ENCODE measurements at regions of chr3 and their contacts with region 1.

Region 1: GRCh38 chr3:143119009-143119914 is at the start of gene CHST2:
- DNase-seq: peak; percentile 86
- ATAC-seq: peak; percentile 88
- H3K4me3 Mint-ChIP-seq: peak within 1 kb of the TSS; percentile 80
- H3K27ac Mint-ChIP-seq: peak within 1 kb of the TSS; percentile 67
- H3K4me1 Mint-ChIP-seq: peaks cover 27% of the 10 kb centered on the region
- H3K27me3 Mint-ChIP-seq: peaks cover 2% of the 10 kb centered on the region
- total RNA-seq, gene CHST2: 5.1 to 6.8 TPM

Region 2: GRCh38 chr3:143081844-143082778 is 37.2 kb before region 1 on chr3:
- CTCF ChIA-PET with region 1: interaction called, 3 read pairs
- POLR2A ChIA-PET with region 1: interaction called, 5 read pairs
- intact Hi-C with region 1: loop called in 1 of 2 experiments (anchors 1 kb)
- DNase-seq: peak; percentile 54
- ATAC-seq: peak; percentile 87
- H3K4me3 Mint-ChIP-seq: peak overlapping the region; percentile 75
- H3K27ac Mint-ChIP-seq: peak overlapping the region; percentile 98
- H3K4me1 Mint-ChIP-seq: peaks cover 36% of the 10 kb centered on the region
- H3K27me3 Mint-ChIP-seq: no peaks in the 10 kb centered on the region

Region 3: GRCh38 chr3:143276592-143276991 is 157.3 kb after region 1 on chr3:
- CTCF ChIA-PET with region 1: interaction called, 3 read pairs
- POLR2A ChIA-PET with region 1: no interaction called
- intact Hi-C with region 1: loop called (anchors 2 to 5 kb)
- DNase-seq: no peak
- ATAC-seq: peak; percentile 99
- H3K4me3 Mint-ChIP-seq: no peak overlapping the region
- H3K27ac Mint-ChIP-seq: no peak overlapping the region
- H3K4me1 Mint-ChIP-seq: peaks cover 23% of the 10 kb centered on the region
- H3K27me3 Mint-ChIP-seq: no peaks in the 10 kb centered on the region

Region 4: DNA sequence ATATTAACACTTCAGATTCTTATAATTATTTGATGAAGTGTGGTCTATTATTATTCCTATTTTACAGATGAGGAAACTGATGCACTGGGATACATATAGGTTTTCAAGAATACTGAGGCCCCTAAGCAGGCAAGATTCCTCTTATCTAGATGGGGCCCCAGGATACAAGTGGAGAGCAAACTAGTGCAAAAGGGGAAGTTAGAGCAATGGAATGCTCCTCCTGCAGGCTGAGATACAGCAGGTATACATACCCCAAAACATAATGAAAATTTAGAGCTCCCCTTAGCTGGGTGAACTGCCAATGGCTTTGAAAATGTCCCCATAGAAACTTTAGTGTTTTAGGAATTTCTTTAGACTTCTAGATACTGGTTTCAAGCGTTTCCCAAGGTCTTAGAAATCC is 247.4 kb after region 1 on chr3:
- CTCF ChIA-PET with region 1: no interaction called
- POLR2A ChIA-PET with region 1: no interaction called
- intact Hi-C with region 1: loop called in 1 of 2 experiments (anchors 5 kb)
- DNase-seq: no peak
- ATAC-seq: no peak
- H3K4me3 Mint-ChIP-seq: no peak overlapping the region
- H3K27ac Mint-ChIP-seq: no peak overlapping the region
- H3K4me1 Mint-ChIP-seq: peaks cover 26% of the 10 kb centered on the region
- H3K27me3 Mint-ChIP-seq: no peaks in the 10 kb centered on the region

Region 5: GRCh38 chr3:143529798-143530197 is 410.5 kb after region 1 on chr3:
- CTCF ChIA-PET with region 1: no interaction called
- POLR2A ChIA-PET with region 1: no interaction called
- intact Hi-C with region 1: loop called in 1 of 2 experiments (anchors 5 kb)
- DNase-seq: no peak
- ATAC-seq: no peak
- H3K4me3 Mint-ChIP-seq: no peak overlapping the region
- H3K27ac Mint-ChIP-seq: no peak overlapping the region
- H3K4me1 Mint-ChIP-seq: peaks cover 10% of the 10 kb centered on the region
- H3K27me3 Mint-ChIP-seq: no peaks in the 10 kb centered on the region

Region 6: GRCh38 chr3:143753456-143753855 is 634.2 kb after region 1 on chr3:
- CTCF ChIA-PET with region 1: no interaction called
- POLR2A ChIA-PET with region 1: no interaction called
- intact Hi-C with region 1: no loop called
- DNase-seq: no peak
- ATAC-seq: no peak
- H3K4me3 Mint-ChIP-seq: no peak overlapping the region
- H3K27ac Mint-ChIP-seq: peak overlapping the region; percentile 30
- H3K4me1 Mint-ChIP-seq: peaks cover 61% of the 10 kb centered on the region
- H3K27me3 Mint-ChIP-seq: no peaks in the 10 kb centered on the region

Region 7: DNA sequence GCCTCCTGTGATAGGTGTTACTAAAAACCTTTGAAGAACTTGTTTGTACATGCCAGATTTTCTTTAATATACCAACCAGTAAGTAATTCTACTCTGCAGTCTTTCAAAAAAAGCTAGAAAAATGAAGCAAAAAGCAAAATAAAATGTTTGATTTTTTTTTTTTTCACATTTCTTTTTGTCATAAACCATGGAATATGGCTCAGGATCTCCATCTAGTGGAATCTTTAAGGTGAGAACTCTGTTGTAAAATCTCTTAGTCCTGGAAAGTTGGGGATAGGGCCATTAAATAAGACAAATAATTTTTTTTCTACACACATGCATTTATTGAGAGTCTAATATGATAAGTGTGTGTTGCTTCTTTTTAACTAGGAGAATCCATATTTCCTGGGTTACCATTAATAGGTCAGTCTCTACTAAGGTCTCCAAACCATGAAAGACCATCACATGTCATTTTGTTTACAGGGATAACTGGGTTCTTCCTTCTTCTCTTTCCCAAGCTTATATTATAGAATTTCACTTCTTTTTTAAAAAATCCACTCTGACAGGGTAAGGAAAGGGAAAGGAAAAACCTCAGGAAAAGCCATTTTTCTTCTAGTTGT is 644.4 kb after region 1 on chr3:
- CTCF ChIA-PET with region 1: interaction called, 3 read pairs
- POLR2A ChIA-PET with region 1: no interaction called
- intact Hi-C with region 1: loop called in 1 of 2 experiments (anchors 2 kb)
- DNase-seq: no peak
- ATAC-seq: no peak
- H3K4me3 Mint-ChIP-seq: no peak overlapping the region
- H3K27ac Mint-ChIP-seq: no peak overlapping the region
- H3K4me1 Mint-ChIP-seq: peaks cover 16% of the 10 kb centered on the region
- H3K27me3 Mint-ChIP-seq: no peaks in the 10 kb centered on the region